ENCODE measurements at regions of chr9 and their contacts with region 1.

Region 1: GRCh38 chr9:90142580-90142979 is 500.0 kb downstream of the DIRAS2 start:
- DNase-seq: peak; percentile 36
- CTCF ChIP-seq: peak; percentile 31

Region 2: DNA sequence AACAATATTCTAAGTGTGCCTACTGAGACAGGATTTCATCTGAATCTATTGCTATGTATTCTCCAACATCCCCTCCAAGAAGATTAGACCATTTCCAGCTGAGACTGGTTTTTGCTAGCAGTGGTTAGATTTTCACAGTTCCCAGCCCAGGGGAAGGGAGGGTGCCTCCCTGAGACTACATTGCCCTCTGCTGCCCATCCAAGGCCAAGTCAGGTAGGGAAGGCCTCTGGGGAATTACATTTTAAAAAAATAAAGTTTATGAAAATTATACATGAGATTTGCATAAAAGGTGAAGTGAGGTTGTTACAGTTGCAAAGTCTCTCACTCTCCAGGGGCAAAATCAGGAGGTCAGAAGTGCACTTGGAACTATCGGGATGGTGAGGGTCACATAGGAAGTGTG is 631.0 kb after region 1 on chr9:
- in situ Hi-C with region 1: loop called (anchors 25 kb)
- DNase-seq: peak; percentile 20
- CTCF ChIP-seq: peak; percentile 27

Measured in GM13976 (cell line).